Right cardiac atrium (tissue), 5 donors: ENCODE measurements at regions of chr17 and their contacts with region 1.

Region 1: DNA sequence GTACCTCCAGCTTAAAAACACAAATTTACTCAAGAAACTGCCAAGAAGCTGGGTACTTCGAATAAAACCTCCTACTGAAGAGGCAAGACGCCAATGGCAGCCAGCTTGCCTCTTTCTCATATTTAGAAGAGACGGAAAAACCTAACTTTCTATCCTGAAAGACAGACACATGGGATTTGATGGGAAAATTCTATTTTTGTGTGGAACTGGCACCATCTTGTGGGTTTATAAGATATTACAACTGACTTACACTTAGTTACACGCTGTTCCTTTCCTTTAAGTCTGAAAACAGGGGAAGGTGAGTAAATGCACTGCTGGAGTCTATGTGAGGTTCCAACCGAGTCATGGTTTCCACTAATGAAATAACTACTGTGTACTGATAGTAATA is 10.3 kb downstream of the ZNF18 start:
- DNase-seq: peak in 1 of 3 donors; percentile 66
- ATAC-seq: peak; percentile 73 to 74
- H3K4me3 ChIP-seq: no peak overlapping the region
- H3K27ac ChIP-seq: no peak overlapping the region
- H3K4me1 ChIP-seq: no peaks in the 10 kb centered on the region
- H3K27me3 ChIP-seq: no peaks in the 10 kb centered on the region

Region 2: GRCh38 chr17:10875979-10876555 is 1110.9 kb before region 1 on chr17:
- intact Hi-C with region 1: loop called in 2 of 4 experiments (anchors 5 to 10 kb)
- DNase-seq: peak; percentile 26 to 61 (median 51)
- ATAC-seq: peak; percentile 45 to 55
- H3K4me3 ChIP-seq: no peak overlapping the region
- H3K27ac ChIP-seq: no peak overlapping the region
- H3K4me1 ChIP-seq: no peaks in the 10 kb centered on the region
- H3K27me3 ChIP-seq: no peaks in the 10 kb centered on the region

Region 3: GRCh38 chr17:12020642-12021622 is 34.0 kb after region 1 on chr17 and contains the start of gene MAP2K4:
- intact Hi-C with region 1: no loop called
- DNase-seq: peak; percentile 93 to 98 (median 97)
- ATAC-seq: peak; percentile 100
- H3K4me3 ChIP-seq: peak within 1 kb of the TSS; percentile 99
- H3K27ac ChIP-seq: peak within 1 kb of the TSS; percentile 69
- H3K4me1 ChIP-seq: no peaks in the 10 kb centered on the region
- H3K27me3 ChIP-seq: no peaks in the 10 kb centered on the region
- total RNA-seq, gene MAP2K4: 29.9 to 34.4 (median 33.7) TPM